ENCODE measurements at regions of chr5 and their contacts with region 1.

Region 1: DNA sequence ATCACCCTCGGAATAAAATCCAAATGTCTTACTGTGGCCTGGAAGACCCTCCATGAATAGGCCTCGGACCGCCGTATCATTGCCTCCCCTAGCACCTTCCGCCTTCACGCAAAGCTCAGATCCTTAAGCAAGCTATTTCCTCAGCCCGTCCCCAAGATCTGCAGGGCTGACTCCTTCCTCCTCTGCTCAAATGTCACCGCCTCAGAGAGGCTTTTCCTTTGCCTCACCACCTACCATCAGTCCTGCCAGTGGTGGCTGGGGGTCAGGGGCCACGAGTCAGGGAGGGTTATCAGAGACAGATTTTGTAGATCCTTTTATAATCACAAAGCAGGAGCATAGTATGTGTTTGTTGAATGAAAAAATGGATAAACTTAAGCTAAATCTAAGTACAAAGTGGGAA is 74.4 kb upstream of the KIF2A start:
- DNase-seq: no peak
- ATAC-seq: no peak
- H3K4me3 Mint-ChIP-seq: no peak overlapping the region
- H3K27ac Mint-ChIP-seq: no peak overlapping the region
- H3K4me1 Mint-ChIP-seq: peaks cover 18% of the 10 kb centered on the region
- H3K27me3 Mint-ChIP-seq: no peaks in the 10 kb centered on the region

Region 2: GRCh38 chr5:62403434-62404250 is 172.1 kb after region 1 on chr5 and contains the start of gene DIMT1:
- CTCF ChIA-PET with region 1: no interaction called
- POLR2A ChIA-PET with region 1: no interaction called
- intact Hi-C with region 1: loop called in 1 of 2 experiments (anchors 10 kb)
- DNase-seq: peak; percentile 97
- ATAC-seq: peak; percentile 99
- H3K4me3 Mint-ChIP-seq: peak within 1 kb of the TSS; percentile 95
- H3K27ac Mint-ChIP-seq: peak within 1 kb of the TSS; percentile 97
- H3K4me1 Mint-ChIP-seq: peaks cover 29% of the 10 kb centered on the region
- H3K27me3 Mint-ChIP-seq: no peaks in the 10 kb centered on the region
- total RNA-seq, gene DIMT1: 38.9 to 52.2 TPM